CD4-positive, alpha-beta T cell (primary cell): ENCODE measurements at regions of chr1 and their contacts with region 1.

Region 1: DNA sequence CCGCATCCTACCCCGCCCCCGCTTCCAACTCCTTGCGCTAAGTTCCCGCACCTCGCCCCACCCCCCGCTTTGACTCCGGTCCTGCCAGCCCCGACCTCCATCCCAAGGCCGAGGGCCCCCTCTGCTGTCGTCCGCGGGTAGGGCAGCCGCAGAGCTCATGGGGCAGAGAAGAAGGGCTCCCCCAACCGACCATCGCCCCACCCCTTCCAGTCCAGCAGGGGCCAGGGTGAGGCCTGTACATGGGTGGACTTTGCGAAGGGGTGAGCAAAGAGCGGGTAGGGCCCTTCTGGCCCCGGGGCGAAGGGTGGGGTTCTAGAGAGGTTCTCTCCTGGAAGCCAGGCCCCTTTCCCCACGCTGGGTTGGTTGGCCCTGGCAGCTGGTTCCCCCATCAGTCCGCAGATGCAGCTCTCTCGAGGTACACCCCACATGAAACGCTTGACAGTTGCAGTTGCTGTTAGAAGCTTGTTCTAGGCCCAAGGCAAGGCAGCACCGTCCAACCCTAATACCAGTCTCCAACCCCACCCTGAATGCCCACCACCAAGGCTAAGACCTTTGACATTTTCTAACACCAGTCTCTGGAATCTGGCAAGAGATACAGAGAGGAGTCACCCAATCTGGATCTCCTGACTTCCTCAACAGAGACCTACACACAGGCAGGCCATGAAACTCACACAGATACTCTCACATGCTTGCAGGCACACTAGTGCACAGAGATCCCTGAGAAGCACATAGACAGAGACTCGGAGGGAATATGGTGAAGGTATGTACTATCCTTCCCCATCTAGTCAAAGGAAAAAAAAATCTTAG is 25.3 kb upstream of the ADGRB2 start:
- DNase-seq: peak; percentile 90 to 98 (median 94)
- ATAC-seq: peak; percentile 82
- H3K4me3 ChIP-seq: peak overlapping the region; percentile 90
- H3K4me3 Mint-ChIP-seq: peak overlapping the region; percentile 98
- H3K27ac ChIP-seq: no peak overlapping the region
- H3K27ac Mint-ChIP-seq: peak overlapping the region; percentile 90
- H3K4me1 ChIP-seq: peaks cover 19% of the 10 kb centered on the region
- H3K4me1 Mint-ChIP-seq: peaks cover 15% of the 10 kb centered on the region
- H3K27me3 ChIP-seq: no peaks in the 10 kb centered on the region
- H3K27me3 Mint-ChIP-seq: no peaks in the 10 kb centered on the region
- CTCF ChIP-seq: peak; percentile 73

Region 2: GRCh38 chr1:31394628-31395193 is 394.8 kb before region 1 on chr1:
- CTCF ChIA-PET with region 1: interaction called, 4 read pairs
- POLR2A ChIA-PET with region 1: no interaction called
- intact Hi-C with region 1: loop called (anchors 5 to 10 kb)
- DNase-seq: peak; percentile 57 to 86 (median 70)
- ATAC-seq: peak; percentile 96
- H3K4me3 ChIP-seq: peak overlapping the region; percentile 52
- H3K4me3 Mint-ChIP-seq: peak overlapping the region; percentile 84
- H3K27ac ChIP-seq: no peak overlapping the region
- H3K27ac Mint-ChIP-seq: no peak overlapping the region
- H3K4me1 ChIP-seq: peaks cover 10% of the 10 kb centered on the region
- H3K4me1 Mint-ChIP-seq: peaks cover 8% of the 10 kb centered on the region
- H3K27me3 ChIP-seq: no peaks in the 10 kb centered on the region
- H3K27me3 Mint-ChIP-seq: peaks cover 4% of the 10 kb centered on the region
- CTCF ChIP-seq: peak; percentile 82

Region 3: GRCh38 chr1:31644560-31645273 is 144.7 kb before region 1 on chr1 and contains the start of gene PEF1:
- CTCF ChIA-PET with region 1: interaction called, 6 read pairs
- POLR2A ChIA-PET with region 1: interaction called, 12 read pairs
- intact Hi-C with region 1: loop called in 1 of 2 experiments (anchors 1 kb)
- DNase-seq: peak; percentile 98 to 100 (median 99)
- ATAC-seq: peak; percentile 89
- H3K4me3 ChIP-seq: peak within 1 kb of the TSS; percentile 85
- H3K4me3 Mint-ChIP-seq: peak within 1 kb of the TSS; percentile 99
- H3K27ac ChIP-seq: peak within 1 kb of the TSS; percentile 99
- H3K27ac Mint-ChIP-seq: peak within 1 kb of the TSS; percentile 100
- H3K4me1 ChIP-seq: peaks cover 52% of the 10 kb centered on the region
- H3K4me1 Mint-ChIP-seq: peaks cover 29% of the 10 kb centered on the region
- H3K27me3 ChIP-seq: no peaks in the 10 kb centered on the region
- H3K27me3 Mint-ChIP-seq: no peaks in the 10 kb centered on the region
- CTCF ChIP-seq: no peak
- total RNA-seq, gene PEF1: 42.3 to 45.9 TPM

Region 4: DNA sequence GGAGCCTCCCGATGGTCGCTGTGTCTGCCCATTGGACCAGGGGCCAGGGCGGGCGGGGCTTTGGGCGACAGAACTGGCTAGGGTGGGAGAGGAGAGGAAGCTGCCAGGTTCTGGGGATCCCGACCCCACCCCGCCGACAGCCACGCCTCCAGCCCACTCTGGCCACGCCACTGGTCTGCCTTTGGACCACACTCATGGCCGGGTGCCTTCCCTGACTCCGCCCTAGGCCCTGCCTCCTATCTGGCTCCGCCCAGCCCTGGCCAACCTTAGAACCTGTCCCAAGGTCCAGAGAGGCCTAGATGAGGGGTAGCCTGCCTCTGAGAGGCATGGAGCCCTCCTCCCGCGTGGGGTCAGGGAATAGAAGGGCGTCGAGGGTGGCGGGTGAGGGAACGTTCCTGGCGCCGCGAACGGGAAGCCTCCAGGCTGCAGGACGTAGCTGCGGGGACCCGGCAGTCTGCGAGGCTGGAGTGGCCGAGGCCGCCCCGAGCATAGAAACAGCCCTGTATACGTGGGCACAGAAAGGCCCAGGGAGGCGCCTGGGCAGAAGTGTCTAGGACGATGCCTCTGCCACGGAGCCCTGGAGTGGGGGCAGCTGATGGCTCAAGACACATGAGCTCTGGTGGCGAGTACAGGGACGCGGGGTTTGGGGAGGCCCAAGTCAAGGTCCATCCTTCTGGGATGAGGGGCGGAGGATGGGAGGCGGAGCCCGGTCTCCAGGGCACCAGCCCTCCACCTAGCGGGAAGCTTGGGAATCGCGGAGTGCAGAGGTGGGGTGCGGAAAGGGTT is 74.2 kb before region 1 on chr1:
- CTCF ChIA-PET with region 1: interaction called, 11 read pairs
- POLR2A ChIA-PET with region 1: interaction called, 3 read pairs
- intact Hi-C with region 1: loop called (anchors 1 to 2 kb)
- DNase-seq: peak in 5 of 14 experiments; percentile 15 to 49 (median 27)
- ATAC-seq: peak; percentile 58
- H3K4me3 ChIP-seq: peak overlapping the region; percentile 24
- H3K4me3 Mint-ChIP-seq: peak overlapping the region; percentile 77
- H3K27ac ChIP-seq: no peak overlapping the region
- H3K27ac Mint-ChIP-seq: no peak overlapping the region
- H3K4me1 ChIP-seq: peaks cover 18% of the 10 kb centered on the region
- H3K4me1 Mint-ChIP-seq: peaks cover 21% of the 10 kb centered on the region
- H3K27me3 ChIP-seq: peaks cover 33 to 42% of the 10 kb centered on the region in 2 experiments
- H3K27me3 Mint-ChIP-seq: peaks cover 75% of the 10 kb centered on the region
- CTCF ChIP-seq: peak; percentile 38

Region 5: GRCh38 chr1:31769720-31770390 is 19.6 kb before region 1 on chr1:
- CTCF ChIA-PET with region 1: interaction called, 14 read pairs
- POLR2A ChIA-PET with region 1: interaction called, 4 read pairs
- intact Hi-C with region 1: no loop called
- DNase-seq: no peak
- ATAC-seq: no peak
- H3K4me3 ChIP-seq: no peak overlapping the region
- H3K4me3 Mint-ChIP-seq: peak overlapping the region; percentile 32
- H3K27ac ChIP-seq: no peak overlapping the region
- H3K27ac Mint-ChIP-seq: peak overlapping the region; percentile 29
- H3K4me1 ChIP-seq: peaks cover 41% of the 10 kb centered on the region
- H3K4me1 Mint-ChIP-seq: peaks cover 49% of the 10 kb centered on the region
- H3K27me3 ChIP-seq: peaks cover 13 to 16% of the 10 kb centered on the region in 2 experiments
- H3K27me3 Mint-ChIP-seq: peaks cover 20% of the 10 kb centered on the region
- CTCF ChIP-seq: no peak